Activated CD8-positive, alpha-beta memory T cell treated with anti-CD3 and anti-CD28 coated beads, Interleukin-2, amount 10 ng/mL, durations not matched to agents 7 days and 5 days (primary cell): ENCODE measurements at regions of chr15 and their contacts with region 1.

Region 1: DNA sequence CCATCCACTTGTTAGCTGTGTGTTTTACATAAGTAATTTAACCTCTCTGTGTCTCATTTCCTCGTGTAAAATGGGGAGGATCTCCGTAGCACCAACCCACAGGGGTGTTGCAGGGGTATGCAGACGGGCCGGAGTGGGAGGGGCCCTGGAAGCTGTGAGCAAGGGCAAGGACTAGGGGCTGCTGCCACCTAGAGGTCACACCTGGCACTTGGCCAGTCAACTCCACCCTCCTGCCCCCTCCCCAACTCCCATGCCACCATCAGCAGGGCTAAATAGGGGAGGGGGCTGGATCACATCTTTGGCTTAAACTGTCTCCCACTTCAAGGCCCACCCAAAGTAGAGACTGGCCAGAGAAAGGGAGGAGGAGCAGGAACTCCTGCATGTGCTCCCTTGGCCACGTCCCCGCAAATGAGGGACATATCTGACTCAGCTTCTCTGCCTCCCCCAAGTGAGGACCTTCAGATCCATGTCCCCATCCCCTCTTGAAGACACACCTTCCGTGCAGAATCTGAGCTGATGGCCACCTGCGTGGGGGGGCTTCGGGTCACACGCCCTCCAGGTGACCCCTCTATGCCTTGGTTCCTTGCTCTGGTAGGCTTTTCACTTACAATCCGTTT is 2.6 kb downstream of the CCDC9B start:
- DNase-seq: peak; percentile 83
- ATAC-seq: peak; percentile 90
- H3K4me3 Mint-ChIP-seq: no peak overlapping the region
- H3K27ac Mint-ChIP-seq: no peak overlapping the region
- H3K4me1 Mint-ChIP-seq: peaks cover 7% of the 10 kb centered on the region
- H3K27me3 Mint-ChIP-seq: peaks cover 2% of the 10 kb centered on the region

Region 2: DNA sequence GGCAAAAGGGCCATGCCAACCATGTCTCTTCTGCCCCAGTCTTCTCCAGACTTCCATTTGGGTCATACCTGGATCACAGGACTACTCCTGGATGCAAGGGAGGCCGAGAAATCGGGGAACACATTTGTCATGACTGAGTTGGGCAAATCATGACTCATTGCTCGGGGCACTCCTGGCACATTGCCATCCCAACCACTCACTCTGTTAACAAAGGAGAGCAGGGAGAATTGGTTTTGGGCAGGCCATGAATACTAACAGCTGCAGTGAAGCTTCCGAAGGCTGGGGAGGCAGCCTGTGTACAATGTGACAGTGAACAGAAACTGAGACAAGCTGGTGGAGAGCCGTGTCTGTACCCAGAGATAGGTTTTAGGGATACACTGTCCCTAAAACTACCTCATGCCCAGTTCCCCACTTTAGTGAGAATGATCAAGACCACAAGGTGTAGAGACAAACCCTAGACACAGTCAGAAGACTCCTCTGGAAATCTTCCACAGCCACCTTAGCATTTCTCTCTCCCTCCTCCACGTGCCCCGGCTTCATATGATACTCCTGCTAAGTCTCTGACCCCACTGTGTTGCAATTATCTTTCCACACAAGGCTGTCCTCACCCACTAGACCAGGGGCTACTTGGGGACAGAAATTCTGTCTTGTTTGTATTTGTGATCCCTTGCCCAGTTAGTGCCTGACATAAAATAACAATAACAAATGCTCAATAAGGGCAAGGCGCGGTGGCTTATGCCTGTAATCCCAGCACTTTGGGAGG is 187.8 kb before region 1 on chr15:
- CTCF ChIA-PET with region 1: no interaction called
- DNase-seq: peak; percentile 33
- ATAC-seq: no peak
- H3K4me3 Mint-ChIP-seq: no peak overlapping the region
- H3K27ac Mint-ChIP-seq: no peak overlapping the region
- H3K4me1 Mint-ChIP-seq: no peaks in the 10 kb centered on the region
- H3K27me3 Mint-ChIP-seq: peaks cover 11% of the 10 kb centered on the region

Region 3: DNA sequence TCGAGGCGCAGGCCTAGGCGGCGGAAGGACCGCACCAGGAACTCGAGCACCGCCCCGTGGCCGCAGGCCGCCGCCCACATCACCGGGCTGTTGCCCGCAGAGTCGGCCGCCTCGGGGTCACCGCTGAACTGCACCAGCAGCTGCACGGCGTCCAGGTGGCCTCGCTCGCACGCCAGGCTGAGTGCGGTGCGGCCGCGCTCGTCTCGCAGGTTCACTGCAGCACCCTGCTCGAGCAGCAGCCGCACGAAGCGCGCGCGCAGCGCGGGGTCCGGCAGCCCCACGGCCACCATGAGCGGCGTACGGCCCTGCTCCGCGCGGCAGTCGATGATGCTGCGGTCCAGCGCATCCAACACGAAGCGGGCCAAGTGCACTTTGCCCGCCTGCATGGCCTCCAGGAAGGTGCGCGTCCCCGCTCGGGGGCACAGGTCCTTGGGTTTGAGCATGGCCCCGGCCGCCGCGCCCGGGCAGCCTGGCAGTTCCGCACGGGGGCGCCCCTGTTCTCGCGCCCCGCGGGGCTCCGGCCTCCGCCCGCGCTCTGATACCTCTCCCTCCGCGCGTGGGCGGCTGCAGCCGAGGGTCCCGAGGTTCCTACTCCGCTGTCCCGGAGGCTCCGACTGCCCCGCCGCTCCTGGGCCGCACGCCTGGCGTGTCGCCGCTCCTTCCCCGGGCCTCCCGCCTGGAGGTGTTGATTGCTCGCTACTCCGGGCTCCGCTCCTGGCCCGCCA is 55.8 kb before region 1 on chr15:
- CTCF ChIA-PET with region 1: interaction called, 270 read pairs
- DNase-seq: peak; percentile 57
- ATAC-seq: peak; percentile 74
- H3K4me3 Mint-ChIP-seq: peak overlapping the region; percentile 58
- H3K27ac Mint-ChIP-seq: no peak overlapping the region
- H3K4me1 Mint-ChIP-seq: peaks cover 6% of the 10 kb centered on the region
- H3K27me3 Mint-ChIP-seq: peaks cover 50% of the 10 kb centered on the region

Region 4: DNA sequence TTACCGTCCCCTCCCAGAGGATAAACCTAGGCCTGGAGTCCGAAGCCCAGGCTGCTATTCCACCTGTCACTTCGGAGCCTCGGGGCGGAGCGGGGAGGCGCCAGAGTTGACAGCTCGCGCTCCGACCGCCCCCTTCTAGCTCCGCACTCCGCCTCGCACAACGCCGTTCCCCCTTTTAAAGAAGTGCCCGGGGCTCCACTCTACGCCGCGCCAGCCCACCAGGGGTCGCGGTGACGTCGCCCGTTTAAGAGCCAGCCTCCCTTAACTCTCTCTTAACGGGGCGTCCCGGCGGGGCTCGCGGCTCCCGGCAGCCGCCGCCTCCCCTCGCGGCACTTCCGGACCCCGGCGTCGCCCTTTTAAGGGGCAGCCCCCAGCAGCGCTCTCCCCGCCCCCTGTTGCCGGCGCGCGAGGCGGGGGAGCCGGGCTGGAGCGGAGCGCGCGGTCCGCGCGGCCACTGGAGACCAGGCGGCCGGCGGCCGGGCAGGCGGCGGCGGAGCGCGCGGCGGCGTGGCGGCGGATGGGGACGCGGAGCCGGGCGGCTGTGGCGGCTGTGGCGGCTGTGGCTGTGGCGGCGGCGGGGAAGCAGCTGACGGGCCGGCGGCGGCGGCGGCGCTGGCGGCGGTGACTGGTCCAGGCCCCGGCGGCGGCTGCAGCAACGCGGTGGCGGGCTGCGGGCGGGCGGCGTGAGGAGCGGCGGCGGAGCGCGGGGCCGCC is 14.8 kb before region 1 on chr15 and contains the start of gene INAFM2:
- CTCF ChIA-PET with region 1: interaction called, 317 read pairs
- DNase-seq: peak; percentile 93
- ATAC-seq: peak; percentile 92
- H3K4me3 Mint-ChIP-seq: peak within 1 kb of the TSS; percentile 67
- H3K27ac Mint-ChIP-seq: peak within 1 kb of the TSS; percentile 38
- H3K4me1 Mint-ChIP-seq: peaks cover 28% of the 10 kb centered on the region
- H3K27me3 Mint-ChIP-seq: peaks cover 16% of the 10 kb centered on the region
- total RNA-seq, gene INAFM2: 4.9 to 10.2 TPM

Region 5: DNA sequence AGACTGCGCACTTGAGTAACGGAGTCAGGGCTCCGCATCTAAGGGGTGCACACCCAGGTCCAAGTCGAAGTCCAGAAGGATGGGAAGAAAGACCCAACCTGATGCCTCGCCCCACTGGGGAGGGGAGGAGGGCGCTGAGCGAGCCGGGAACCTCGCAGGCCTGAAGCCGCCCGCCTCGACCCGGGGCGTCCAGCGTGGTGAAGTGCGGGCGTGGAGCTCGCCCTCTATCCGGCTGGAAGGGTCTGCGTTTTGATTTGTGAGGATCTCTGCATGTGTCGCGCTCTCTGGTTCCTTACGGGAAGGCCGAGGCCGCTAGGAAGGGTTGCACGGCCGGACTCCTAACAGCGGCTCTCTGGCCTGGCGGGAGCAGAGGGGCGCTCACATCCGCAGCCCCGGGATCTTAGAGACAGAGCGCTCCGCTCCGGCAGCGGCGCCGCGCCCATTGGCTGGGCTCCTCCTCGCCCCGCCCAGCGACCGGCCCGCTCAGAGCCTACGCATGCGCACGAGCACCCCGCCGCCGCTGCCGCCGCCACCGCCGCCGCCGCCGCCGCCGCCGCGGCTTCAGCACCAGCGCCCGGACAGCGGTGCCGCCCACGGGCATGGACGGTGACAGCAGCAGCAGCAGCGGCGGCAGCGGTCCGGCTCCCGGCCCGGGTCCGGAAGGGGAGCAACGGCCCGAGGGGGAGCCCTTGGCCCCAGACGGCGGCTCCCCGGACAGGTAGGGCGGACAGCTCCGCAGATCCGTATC is 19.7 kb after region 1 on chr15 and contains the start of gene DISP2:
- CTCF ChIA-PET with region 1: interaction called, 49 read pairs
- DNase-seq: peak; percentile 89
- ATAC-seq: peak; percentile 93
- H3K4me3 Mint-ChIP-seq: peak within 1 kb of the TSS; percentile 70
- H3K27ac Mint-ChIP-seq: no peak within 1 kb of the TSS
- H3K4me1 Mint-ChIP-seq: peaks cover 9% of the 10 kb centered on the region
- H3K27me3 Mint-ChIP-seq: peaks cover 10% of the 10 kb centered on the region
- total RNA-seq, gene DISP2: 0.23 to 0.37 TPM

Region 6: DNA sequence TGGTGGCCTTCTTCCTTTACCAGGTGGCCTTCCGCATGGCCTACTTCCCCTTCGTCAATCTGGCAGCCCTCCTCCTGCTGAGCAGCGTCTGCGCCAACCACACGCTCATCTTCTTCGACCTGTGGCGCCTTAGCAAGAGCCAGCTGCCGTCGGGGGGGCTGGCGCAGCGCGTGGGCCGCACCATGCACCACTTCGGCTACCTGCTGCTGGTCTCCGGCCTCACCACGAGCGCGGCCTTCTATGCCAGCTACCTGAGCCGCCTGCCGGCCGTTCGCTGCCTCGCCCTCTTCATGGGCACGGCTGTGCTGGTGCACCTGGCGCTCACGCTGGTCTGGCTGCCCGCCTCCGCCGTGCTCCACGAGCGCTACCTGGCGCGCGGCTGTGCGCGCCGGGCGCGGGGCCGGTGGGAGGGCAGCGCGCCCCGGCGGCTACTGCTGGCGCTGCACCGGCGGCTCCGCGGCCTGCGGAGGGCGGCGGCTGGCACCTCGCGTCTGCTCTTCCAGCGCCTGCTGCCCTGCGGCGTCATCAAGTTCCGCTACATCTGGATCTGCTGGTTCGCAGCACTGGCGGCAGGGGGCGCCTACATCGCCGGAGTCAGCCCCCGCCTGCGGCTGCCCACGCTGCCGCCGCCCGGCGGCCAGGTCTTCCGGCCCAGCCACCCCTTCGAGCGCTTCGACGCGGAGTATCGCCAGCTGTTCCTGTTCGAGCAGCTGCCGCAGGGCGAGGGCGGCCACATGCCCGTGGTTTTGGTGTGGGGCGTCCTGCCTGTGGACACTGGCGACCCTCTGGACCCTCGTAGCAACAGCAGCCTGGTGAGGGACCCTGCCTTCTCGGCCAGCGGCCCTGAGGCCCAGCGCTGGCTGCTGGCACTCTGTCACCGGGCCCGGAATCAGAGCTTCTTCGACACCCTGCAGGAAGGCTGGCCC is 29.8 kb after region 1 on chr15:
- CTCF ChIA-PET with region 1: interaction called, 53 read pairs
- DNase-seq: peak; percentile 93
- ATAC-seq: peak; percentile 96
- H3K4me3 Mint-ChIP-seq: peak overlapping the region; percentile 76
- H3K27ac Mint-ChIP-seq: peak overlapping the region; percentile 71
- H3K4me1 Mint-ChIP-seq: peaks cover 14% of the 10 kb centered on the region
- H3K27me3 Mint-ChIP-seq: peaks cover 15% of the 10 kb centered on the region

Region 7: GRCh38 chr15:40421246-40422157 is 83.4 kb after region 1 on chr15:
- CTCF ChIA-PET with region 1: interaction called, 235 read pairs
- DNase-seq: peak; percentile 87
- ATAC-seq: peak; percentile 99
- H3K4me3 Mint-ChIP-seq: no peak overlapping the region
- H3K27ac Mint-ChIP-seq: no peak overlapping the region
- H3K4me1 Mint-ChIP-seq: peaks cover 7% of the 10 kb centered on the region
- H3K27me3 Mint-ChIP-seq: no peaks in the 10 kb centered on the region

Region 8: GRCh38 chr15:40430271-40430805 is 92.2 kb after region 1 on chr15:
- CTCF ChIA-PET with region 1: interaction called, 235 read pairs
- DNase-seq: no peak
- ATAC-seq: no peak
- H3K4me3 Mint-ChIP-seq: no peak overlapping the region
- H3K27ac Mint-ChIP-seq: no peak overlapping the region
- H3K4me1 Mint-ChIP-seq: no peaks in the 10 kb centered on the region
- H3K27me3 Mint-ChIP-seq: peaks cover 15% of the 10 kb centered on the region